Activated CD4-positive, alpha-beta T cell treated with anti-CD3 and anti-CD28 coated beads for 36 hours (primary cell): ENCODE measurements at regions of chr19 and their contacts with region 1.

Region 1: GRCh38 chr19:12789904-12790619 is 1.2 kb upstream of the JUNB start:
- DNase-seq: peak; percentile 99
- ATAC-seq: peak; percentile 48
- H3K4me3 Mint-ChIP-seq: peak overlapping the region; percentile 92
- H3K27ac Mint-ChIP-seq: peak overlapping the region; percentile 98
- H3K4me1 Mint-ChIP-seq: peaks cover 28% of the 10 kb centered on the region
- H3K27me3 Mint-ChIP-seq: no peaks in the 10 kb centered on the region

Region 2: DNA sequence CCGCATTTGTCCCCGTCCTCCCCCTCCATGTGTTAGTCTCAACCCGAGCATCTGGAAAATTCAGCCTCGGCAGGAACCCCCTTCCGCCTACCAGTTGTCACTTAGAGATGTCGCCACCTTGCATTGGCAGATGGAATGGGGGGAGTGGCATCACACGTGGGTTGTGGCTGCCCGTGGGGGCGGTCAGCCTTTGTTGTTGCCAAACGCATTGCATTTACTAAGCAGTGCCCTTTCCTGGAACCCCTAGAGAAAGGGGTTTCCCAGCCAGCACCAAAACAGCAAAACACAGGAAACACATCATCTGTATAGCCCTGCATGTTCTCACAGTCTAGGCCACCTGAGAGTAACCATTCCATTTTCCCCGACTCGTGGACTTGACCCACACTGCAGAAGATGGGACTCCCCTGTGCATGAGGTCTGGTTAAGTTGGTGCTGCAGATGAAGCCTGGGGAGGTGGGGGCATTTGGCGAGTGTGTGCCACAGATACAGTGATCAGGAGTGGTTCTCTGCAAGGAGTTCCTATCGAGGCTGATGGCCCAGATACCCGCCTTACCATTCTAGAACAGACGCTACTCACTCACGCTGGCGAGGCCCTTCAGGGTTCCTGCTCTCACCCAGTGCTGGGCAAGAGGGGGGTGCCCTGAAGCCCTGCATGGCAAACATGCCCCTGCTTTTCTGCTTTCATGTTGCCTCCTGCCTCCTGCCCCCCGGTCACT is 1992.4 kb before region 1 on chr19:
- CTCF ChIA-PET with region 1: no interaction called
- POLR2A ChIA-PET with region 1: no interaction called
- intact Hi-C with region 1: no loop called
- DNase-seq: peak; percentile 95
- ATAC-seq: peak; percentile 94
- H3K4me3 Mint-ChIP-seq: peak overlapping the region; percentile 68
- H3K27ac Mint-ChIP-seq: peak overlapping the region; percentile 97
- H3K4me1 Mint-ChIP-seq: peaks cover 36% of the 10 kb centered on the region
- H3K27me3 Mint-ChIP-seq: no peaks in the 10 kb centered on the region

Region 3: DNA sequence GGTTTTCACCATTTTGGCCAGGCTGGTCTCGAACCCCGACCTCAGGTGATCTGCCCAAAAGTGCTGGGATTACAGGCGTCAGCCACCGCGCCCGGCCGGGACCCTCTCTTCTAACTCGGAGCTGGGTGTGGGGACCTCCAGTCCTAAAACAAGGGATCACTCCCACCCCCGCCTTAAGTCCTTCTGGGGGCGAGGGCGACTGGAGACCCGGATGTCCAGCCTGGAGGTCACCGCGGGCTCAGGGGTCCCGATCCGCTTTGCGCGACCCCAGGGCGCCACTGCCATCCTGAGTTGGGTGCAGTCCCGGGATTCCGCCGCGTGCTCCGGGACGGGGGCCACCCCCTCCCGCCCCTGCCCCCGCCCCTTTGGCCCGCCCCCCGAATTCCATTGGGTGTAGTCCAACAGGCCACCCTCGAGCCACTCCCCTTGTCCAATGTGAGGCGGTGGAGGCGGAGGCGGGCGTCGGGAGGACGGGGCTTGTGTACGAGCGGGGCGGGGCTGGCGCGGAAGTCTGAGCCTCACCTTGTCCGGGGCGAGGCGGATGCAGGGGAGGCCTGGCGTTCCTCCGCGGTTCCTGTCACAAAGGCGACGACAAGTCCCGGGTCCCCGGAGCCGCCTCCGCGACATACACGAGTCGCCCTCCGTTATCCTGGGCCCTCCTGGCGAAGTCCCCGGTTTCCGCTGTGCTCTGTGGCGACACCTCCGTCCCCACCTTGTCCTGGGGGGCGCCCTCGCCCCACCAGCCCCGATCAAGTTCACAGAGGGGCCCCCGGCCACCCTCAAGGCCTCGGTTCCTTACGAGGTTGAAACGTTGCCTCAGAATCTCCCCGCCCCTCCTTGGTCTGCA is 1699.8 kb before region 1 on chr19:
- CTCF ChIA-PET with region 1: no interaction called
- POLR2A ChIA-PET with region 1: no interaction called
- intact Hi-C with region 1: loop called in 1 of 2 experiments (anchors 5 kb)
- DNase-seq: peak; percentile 99
- ATAC-seq: peak; percentile 88
- H3K4me3 Mint-ChIP-seq: peak overlapping the region; percentile 93
- H3K27ac Mint-ChIP-seq: peak overlapping the region; percentile 97
- H3K4me1 Mint-ChIP-seq: peaks cover 51% of the 10 kb centered on the region
- H3K27me3 Mint-ChIP-seq: no peaks in the 10 kb centered on the region

Region 4: DNA sequence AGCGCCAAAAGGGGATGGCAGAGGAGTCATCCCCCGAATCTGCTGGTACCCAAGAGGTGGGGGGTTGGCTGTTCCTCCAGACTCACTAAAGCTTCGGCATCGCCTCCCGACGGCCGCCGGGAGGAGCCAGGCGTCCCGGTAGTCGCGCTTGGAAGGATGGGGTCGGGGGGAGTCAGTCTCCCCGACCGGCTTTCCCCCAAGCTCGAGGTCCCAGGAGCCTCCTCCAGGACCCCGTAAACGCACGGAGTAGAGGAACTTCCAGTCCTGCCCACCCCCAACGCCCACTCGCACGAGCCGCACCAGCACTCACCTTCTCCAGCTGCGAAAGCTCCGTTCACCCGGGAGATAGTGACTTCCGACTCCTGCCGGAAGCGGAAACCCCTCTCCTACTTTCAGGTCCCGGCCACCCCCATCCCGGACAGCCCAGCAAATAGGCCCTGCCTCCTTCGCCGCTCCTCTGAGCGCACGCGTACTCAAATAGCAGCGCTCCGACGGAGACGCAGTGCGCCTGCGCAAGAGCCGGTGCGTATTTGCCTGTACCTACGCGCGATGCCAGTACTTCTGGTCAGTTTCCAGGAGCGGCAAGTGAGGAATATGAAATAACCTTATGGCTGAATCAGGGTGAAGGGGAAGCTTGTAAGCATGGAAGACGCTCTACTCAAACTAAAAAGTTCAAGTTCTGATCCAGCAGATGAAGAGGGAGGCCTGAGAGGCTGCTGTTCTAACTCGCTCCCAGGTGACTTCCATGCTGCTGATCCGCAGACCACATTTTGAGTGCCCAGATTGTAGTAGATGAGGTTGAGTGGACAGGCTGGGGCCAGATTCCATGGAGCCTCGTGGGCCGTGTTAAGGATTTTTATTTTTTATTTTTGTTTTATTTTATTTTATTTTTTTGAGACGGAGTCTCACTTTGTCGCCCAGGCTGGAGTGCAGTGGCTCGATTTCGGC is 1230.9 kb before region 1 on chr19 and contains the start of gene ELOF1:
- CTCF ChIA-PET with region 1: no interaction called
- POLR2A ChIA-PET with region 1: no interaction called
- intact Hi-C with region 1: no loop called
- DNase-seq: peak; percentile 99
- ATAC-seq: peak; percentile 93
- H3K4me3 Mint-ChIP-seq: peak within 1 kb of the TSS; percentile 90
- H3K27ac Mint-ChIP-seq: peak within 1 kb of the TSS; percentile 94
- H3K4me1 Mint-ChIP-seq: peaks cover 44% of the 10 kb centered on the region
- H3K27me3 Mint-ChIP-seq: no peaks in the 10 kb centered on the region
- total RNA-seq, gene ELOF1: 48.0 to 53.7 TPM

Region 5: GRCh38 chr19:12757544-12758274 is 32.4 kb before region 1 on chr19:
- CTCF ChIA-PET with region 1: interaction called, 451 read pairs
- POLR2A ChIA-PET with region 1: interaction called, 5 read pairs
- intact Hi-C with region 1: no loop called
- DNase-seq: peak; percentile 83
- ATAC-seq: peak; percentile 84
- H3K4me3 Mint-ChIP-seq: peak overlapping the region; percentile 19
- H3K27ac Mint-ChIP-seq: no peak overlapping the region
- H3K4me1 Mint-ChIP-seq: peaks cover 6% of the 10 kb centered on the region
- H3K27me3 Mint-ChIP-seq: peaks cover 20% of the 10 kb centered on the region

Region 6: GRCh38 chr19:12806239-12807081 is 16.4 kb after region 1 on chr19 and contains the start of gene RNASEH2A:
- CTCF ChIA-PET with region 1: interaction called, 17 read pairs
- POLR2A ChIA-PET with region 1: interaction called, 9 read pairs
- intact Hi-C with region 1: loop called in 1 of 2 experiments (anchors 1 kb)
- DNase-seq: peak; percentile 94
- ATAC-seq: peak; percentile 93
- H3K4me3 Mint-ChIP-seq: peak within 1 kb of the TSS; percentile 89
- H3K27ac Mint-ChIP-seq: peak within 1 kb of the TSS; percentile 80
- H3K4me1 Mint-ChIP-seq: peaks cover 24% of the 10 kb centered on the region
- H3K27me3 Mint-ChIP-seq: no peaks in the 10 kb centered on the region
- total RNA-seq, gene RNASEH2A: 27.0 to 51.1 TPM

Region 7: GRCh38 chr19:13117772-13118423 is 327.8 kb after region 1 on chr19 and contains the start of gene NACC1:
- CTCF ChIA-PET with region 1: no interaction called
- POLR2A ChIA-PET with region 1: no interaction called
- intact Hi-C with region 1: loop called in 1 of 2 experiments (anchors 5 kb)
- DNase-seq: peak; percentile 95
- ATAC-seq: peak; percentile 85
- H3K4me3 Mint-ChIP-seq: peak within 1 kb of the TSS; percentile 87
- H3K27ac Mint-ChIP-seq: peak within 1 kb of the TSS; percentile 95
- H3K4me1 Mint-ChIP-seq: peaks cover 49% of the 10 kb centered on the region
- H3K27me3 Mint-ChIP-seq: no peaks in the 10 kb centered on the region
- total RNA-seq, gene NACC1: 77.5 to 84.5 TPM

Region 8: DNA sequence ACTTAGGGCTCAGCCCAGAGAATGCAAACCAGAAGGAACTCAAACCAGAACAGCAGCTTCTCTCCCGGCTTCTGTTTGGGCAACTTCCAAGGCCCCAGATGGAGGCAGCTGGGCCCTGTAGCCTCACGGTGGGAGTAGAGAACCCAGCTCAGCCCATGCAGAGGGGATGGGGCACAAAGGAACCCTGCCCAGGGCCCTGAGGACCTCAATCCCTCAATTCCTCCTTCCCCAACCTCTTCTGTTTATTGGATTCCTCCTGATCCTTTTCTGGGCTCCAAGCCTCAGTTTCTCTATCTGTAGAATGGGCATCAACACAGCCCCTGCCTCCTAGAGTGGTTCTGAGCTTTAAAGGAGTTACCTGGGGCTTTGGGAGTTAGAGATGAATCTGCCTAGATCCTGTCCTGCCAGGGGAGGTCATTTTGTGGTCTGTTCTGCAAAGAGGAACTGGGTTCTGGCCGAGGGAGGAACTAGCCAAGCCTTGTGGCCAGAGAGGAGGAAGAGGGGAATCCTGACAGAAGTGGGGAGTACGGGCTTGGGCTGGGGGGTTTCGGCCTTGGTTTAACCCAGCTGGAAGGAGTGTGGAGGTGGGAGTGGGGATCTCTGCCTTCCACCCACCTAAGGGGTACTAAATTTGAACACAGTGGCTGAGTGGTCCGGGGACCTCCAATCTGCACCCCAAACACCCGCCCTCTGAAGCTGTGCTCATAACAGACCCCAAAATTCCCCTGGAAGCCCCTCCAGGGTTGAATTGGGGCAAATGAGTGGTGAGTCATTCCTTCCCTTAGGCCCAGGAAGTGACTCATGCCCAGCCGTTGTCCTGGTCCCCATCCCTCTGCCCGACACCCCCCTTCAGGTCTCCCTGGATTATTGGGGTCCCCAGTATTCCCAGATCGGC is 1593.8 kb after region 1 on chr19:
- CTCF ChIA-PET with region 1: no interaction called
- POLR2A ChIA-PET with region 1: no interaction called
- intact Hi-C with region 1: loop called in 1 of 2 experiments (anchors 5 kb)
- DNase-seq: peak; percentile 72
- ATAC-seq: peak; percentile 10
- H3K4me3 Mint-ChIP-seq: peak overlapping the region; percentile 92
- H3K27ac Mint-ChIP-seq: peak overlapping the region; percentile 99
- H3K4me1 Mint-ChIP-seq: peaks cover 40% of the 10 kb centered on the region
- H3K27me3 Mint-ChIP-seq: no peaks in the 10 kb centered on the region